ENCODE measurements at regions of chr7 and their contacts with region 1.

Region 1: DNA sequence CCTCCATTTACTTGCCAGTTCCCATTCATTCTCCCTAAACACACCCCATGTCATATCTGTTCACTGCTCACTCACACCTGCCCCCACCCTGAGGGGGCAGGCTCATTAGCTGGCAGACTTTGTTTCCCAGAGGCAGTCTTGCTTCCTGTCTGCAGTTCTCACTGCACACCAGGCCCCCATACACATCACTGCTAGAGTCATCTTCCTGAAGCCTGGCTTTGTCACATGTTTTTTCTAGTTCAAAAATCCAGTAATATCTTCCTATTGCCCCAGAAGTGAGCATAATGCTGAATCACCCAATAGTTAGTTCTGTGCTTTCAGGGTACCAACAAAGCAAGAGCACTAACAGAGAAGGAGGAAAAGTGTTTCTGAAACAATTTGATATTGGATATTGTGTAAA is 1.9 kb downstream of the LRRC72 start:
- DNase-seq: no peak
- ATAC-seq: 0 out of 2 replicates have a peak, but pooled peaks have one; percentile 12
- H3K4me3 ChIP-seq: no peak overlapping the region
- H3K27ac ChIP-seq: no peak overlapping the region
- H3K4me1 ChIP-seq: no peaks in the 10 kb centered on the region
- H3K27me3 ChIP-seq: no peaks in the 10 kb centered on the region; the same call in 1 of the 2 replicates
- CTCF ChIP-seq: no peak

Region 2: GRCh38 chr7:16587790-16588189 is 59.3 kb after region 1 on chr7:
- CTCF ChIA-PET with region 1: no interaction called
- POLR2A ChIA-PET with region 1: interaction called, 21 read pairs
- in situ Hi-C with region 1: no loop called
- intact Hi-C with region 1: no loop called
- DNase-seq: no peak
- ATAC-seq: no peak
- H3K4me3 ChIP-seq: no peak overlapping the region
- H3K27ac ChIP-seq: no peak overlapping the region
- H3K4me1 ChIP-seq: no peaks in the 10 kb centered on the region
- H3K27me3 ChIP-seq: no peaks in the 10 kb centered on the region
- CTCF ChIP-seq: no peak

Region 3: DNA sequence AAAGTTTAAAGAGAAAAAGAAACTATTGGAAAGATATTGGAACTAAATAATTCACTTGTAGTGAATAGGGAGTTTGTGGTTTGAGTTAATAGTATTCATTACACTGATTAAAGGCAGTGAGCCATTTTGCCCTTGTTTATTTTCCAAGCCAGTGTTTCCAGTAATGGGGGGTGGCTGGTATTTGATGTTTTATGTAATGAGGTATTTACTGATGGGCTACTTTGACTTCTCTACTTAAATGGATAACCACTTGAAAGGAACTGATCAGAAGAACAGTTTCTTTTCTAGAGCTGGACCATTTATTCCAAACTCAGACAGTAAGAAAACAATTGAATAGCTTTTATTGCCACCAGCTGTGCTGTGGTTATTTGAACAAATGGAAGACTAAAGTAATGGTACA is 1740.1 kb after region 1 on chr7:
- CTCF ChIA-PET with region 1: no interaction called
- POLR2A ChIA-PET with region 1: no interaction called
- in situ Hi-C with region 1: no loop called
- intact Hi-C with region 1: no loop called
- DNase-seq: no peak
- ATAC-seq: no peak
- H3K4me3 ChIP-seq: no peak overlapping the region
- H3K27ac ChIP-seq: no peak overlapping the region
- H3K4me1 ChIP-seq: no peaks in the 10 kb centered on the region
- H3K27me3 ChIP-seq: no peaks in the 10 kb centered on the region; the same call in 1 of the 2 replicates
- CTCF ChIP-seq: no peak

Measured in Panc1 (cell line).